A549 (cell line): ENCODE measurements at regions of chr2 and their contacts with region 1.

Region 1: DNA sequence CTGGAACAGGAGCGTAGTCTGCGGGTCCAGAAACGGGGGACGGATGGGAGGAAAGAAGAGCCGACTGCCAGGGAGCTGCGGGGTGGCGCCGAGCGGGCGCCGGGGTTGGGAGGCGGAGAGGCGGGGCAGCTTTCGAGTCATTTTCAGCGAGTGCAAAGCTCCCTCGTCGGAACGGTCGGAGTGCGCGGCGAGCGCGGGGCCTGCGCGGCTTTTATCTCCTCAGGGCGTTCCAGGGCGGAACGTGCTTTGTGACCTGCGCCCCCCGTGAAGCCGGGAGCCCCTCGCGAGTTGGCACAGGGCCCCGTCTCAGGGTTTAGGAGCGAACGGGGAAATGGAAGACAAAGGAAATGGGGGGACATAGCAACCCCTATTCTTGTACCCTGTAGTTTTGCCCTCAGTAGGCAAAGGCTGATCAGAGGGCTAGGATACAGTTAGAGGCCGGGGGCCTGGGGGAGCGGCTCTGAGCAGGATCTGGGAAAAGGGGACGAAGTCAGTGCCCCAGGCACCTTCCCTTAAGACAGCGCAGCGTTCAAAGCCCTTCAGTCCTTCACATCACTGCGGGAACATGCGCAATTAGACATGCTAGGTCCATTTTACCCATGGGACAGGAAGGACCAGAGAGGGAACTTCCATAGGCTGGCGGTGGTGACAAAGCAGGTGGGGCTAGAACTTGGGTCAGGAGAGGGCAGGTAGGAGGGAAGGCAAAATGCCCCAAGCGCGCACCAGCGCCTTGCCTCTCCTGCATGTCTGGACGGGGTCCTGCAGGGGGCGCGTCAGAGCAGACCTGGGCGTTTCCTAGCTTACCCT is 60.1 kb upstream of the IL1RL1 start:
- DNase-seq: peak; percentile 43 to 68
- ATAC-seq: peak; percentile 82 to 93
- H3K4me3 ChIP-seq: peak overlapping the region; percentile 50
- H3K27ac ChIP-seq: peak overlapping the region; percentile 61 to 79; a peak in 5 of 6 replicates
- H3K4me1 ChIP-seq: no peaks in the 10 kb centered on the region
- CTCF ChIP-seq: peak; percentile 72
- EP300 ChIP-seq: no peak
- POLR2A ChIP-seq: no peak
- RAD21 ChIP-seq: peak; percentile 47 to 49

Region 2: DNA sequence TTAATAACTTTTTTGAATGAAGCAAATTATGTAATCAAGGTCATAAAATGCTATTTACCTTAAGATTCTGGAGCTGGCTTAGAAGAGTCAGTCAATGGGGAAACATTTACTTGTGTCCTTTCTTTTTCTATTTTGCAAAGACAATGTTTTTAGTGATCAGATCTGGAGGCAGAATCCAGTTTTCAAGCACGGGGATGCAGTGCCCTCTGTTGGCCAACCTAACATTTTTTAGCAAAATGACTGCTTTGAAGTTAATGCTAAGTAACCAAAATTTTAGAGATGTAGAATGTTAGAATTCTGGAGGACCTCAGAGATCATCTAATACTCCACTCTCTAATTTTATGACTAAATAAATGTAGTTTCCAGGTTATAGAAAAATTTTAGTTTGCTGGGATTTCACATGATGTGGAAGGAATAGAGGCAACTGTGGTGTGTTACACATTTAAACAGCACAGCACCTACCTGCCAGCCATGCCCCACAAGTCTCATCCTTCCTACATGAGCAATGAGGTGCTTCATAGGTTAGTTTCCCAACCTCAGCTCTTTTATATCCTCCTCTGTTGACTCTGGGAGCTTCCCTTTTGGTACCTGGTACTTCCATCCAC is 198.2 kb after region 1 on chr2:
- CTCF ChIA-PET with region 1: interaction called, 10 read pairs
- POLR2A ChIA-PET with region 1: no interaction called
- DNase-seq: peak; percentile 28 to 42
- ATAC-seq: peak in 1 of 2 experiments; percentile 66; a peak in 4 of 6 replicates
- H3K4me3 ChIP-seq: no peak overlapping the region
- H3K27ac ChIP-seq: no peak overlapping the region
- H3K4me1 ChIP-seq: no peaks in the 10 kb centered on the region
- CTCF ChIP-seq: peak; percentile 90
- EP300 ChIP-seq: no peak
- POLR2A ChIP-seq: no peak
- RAD21 ChIP-seq: peak; percentile 82 to 83

Region 3: GRCh38 chr2:102826904-102827303 is 575.7 kb after region 1 on chr2:
- CTCF ChIA-PET with region 1: no interaction called
- POLR2A ChIA-PET with region 1: no interaction called
- DNase-seq: no peak
- ATAC-seq: no peak
- H3K4me3 ChIP-seq: no peak overlapping the region
- H3K27ac ChIP-seq: no peak overlapping the region
- H3K4me1 ChIP-seq: no peaks in the 10 kb centered on the region
- CTCF ChIP-seq: no peak
- EP300 ChIP-seq: no peak
- POLR2A ChIP-seq: no peak
- RAD21 ChIP-seq: no peak